ENCODE measurements at regions of chr12 and their contacts with region 1.

Region 1: GRCh38 chr12:15584366-15585041 is 204.7 kb downstream of the EPS8 start:
- DNase-seq: peak in 8 of 14 experiments; percentile 7 to 85 (median 44)
- ATAC-seq: peak; percentile 61
- H3K4me3 ChIP-seq: no peak overlapping the region
- H3K4me3 Mint-ChIP-seq: no peak overlapping the region
- H3K27ac ChIP-seq: no peak overlapping the region
- H3K27ac Mint-ChIP-seq: no peak overlapping the region
- H3K4me1 ChIP-seq: no peaks in the 10 kb centered on the region
- H3K4me1 Mint-ChIP-seq: peaks cover 18% of the 10 kb centered on the region
- H3K27me3 ChIP-seq: no peaks in the 10 kb centered on the region
- H3K27me3 Mint-ChIP-seq: no peaks in the 10 kb centered on the region
- CTCF ChIP-seq: peak; percentile 77

Region 2: GRCh38 chr12:15227004-15227679 is 357.4 kb before region 1 on chr12:
- CTCF ChIA-PET with region 1: no interaction called
- POLR2A ChIA-PET with region 1: no interaction called
- intact Hi-C with region 1: loop called in 1 of 2 experiments (anchors 5 kb)
- DNase-seq: peak in 7 of 14 experiments; percentile 2 to 43 (median 20)
- ATAC-seq: no peak
- H3K4me3 ChIP-seq: no peak overlapping the region
- H3K4me3 Mint-ChIP-seq: no peak overlapping the region
- H3K27ac ChIP-seq: no peak overlapping the region
- H3K27ac Mint-ChIP-seq: no peak overlapping the region
- H3K4me1 ChIP-seq: no peaks in the 10 kb centered on the region
- H3K4me1 Mint-ChIP-seq: peaks cover 4% of the 10 kb centered on the region
- H3K27me3 ChIP-seq: peaks cover 3 to 38% of the 10 kb centered on the region in 2 experiments
- H3K27me3 Mint-ChIP-seq: peaks cover 66% of the 10 kb centered on the region
- CTCF ChIP-seq: peak; percentile 41

Region 3: GRCh38 chr12:15276088-15276698 is 308.3 kb before region 1 on chr12:
- CTCF ChIA-PET with region 1: interaction called, 5 read pairs
- POLR2A ChIA-PET with region 1: interaction called, 4 read pairs
- intact Hi-C with region 1: loop called (anchors 1 to 2 kb)
- DNase-seq: peak in 3 of 14 experiments; percentile 11 to 36 (median 32)
- ATAC-seq: no peak
- H3K4me3 ChIP-seq: no peak overlapping the region
- H3K4me3 Mint-ChIP-seq: no peak overlapping the region
- H3K27ac ChIP-seq: no peak overlapping the region
- H3K27ac Mint-ChIP-seq: no peak overlapping the region
- H3K4me1 ChIP-seq: peaks cover 12% of the 10 kb centered on the region
- H3K4me1 Mint-ChIP-seq: peaks cover 10% of the 10 kb centered on the region
- H3K27me3 ChIP-seq: peaks cover 0 to 12% of the 10 kb centered on the region in 2 experiments
- H3K27me3 Mint-ChIP-seq: peaks cover under 1% of the 10 kb centered on the region
- CTCF ChIP-seq: peak; percentile 75

Region 4: GRCh38 chr12:15546102-15546701 is 38.3 kb before region 1 on chr12:
- CTCF ChIA-PET with region 1: interaction called, 9 read pairs
- POLR2A ChIA-PET with region 1: interaction called, 24 read pairs
- intact Hi-C with region 1: no loop called
- DNase-seq: peak in 10 of 14 experiments; percentile 21 to 81 (median 45)
- ATAC-seq: peak; percentile 93
- H3K4me3 ChIP-seq: peak overlapping the region; percentile 19
- H3K4me3 Mint-ChIP-seq: peak overlapping the region; percentile 83
- H3K27ac ChIP-seq: peak overlapping the region; percentile 59 to 67
- H3K27ac Mint-ChIP-seq: peak overlapping the region; percentile 100
- H3K4me1 ChIP-seq: peaks cover 22% of the 10 kb centered on the region
- H3K4me1 Mint-ChIP-seq: peaks cover 85% of the 10 kb centered on the region
- H3K27me3 ChIP-seq: no peaks in the 10 kb centered on the region
- H3K27me3 Mint-ChIP-seq: no peaks in the 10 kb centered on the region
- CTCF ChIP-seq: no peak

Region 5: DNA sequence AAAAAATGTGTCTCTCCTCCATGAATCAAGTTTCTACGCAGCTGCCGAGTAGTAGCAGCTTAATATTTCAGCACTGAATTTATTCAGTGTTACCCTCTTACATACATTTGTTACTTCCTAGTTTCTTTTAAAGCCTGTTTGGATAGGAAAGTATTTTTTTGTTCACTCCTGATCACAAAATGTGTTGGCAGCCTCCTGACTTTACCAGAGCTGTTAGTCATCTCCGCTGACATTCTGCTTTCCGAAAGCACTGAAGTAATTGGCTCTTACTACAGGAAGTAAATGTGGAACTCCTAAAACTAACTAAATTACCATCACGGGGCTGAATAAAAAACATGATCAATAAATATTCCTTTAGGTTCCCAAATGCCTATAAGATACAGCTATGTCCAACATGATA is 20.8 kb before region 1 on chr12:
- CTCF ChIA-PET with region 1: interaction called, 16 read pairs
- POLR2A ChIA-PET with region 1: interaction called, 5 read pairs
- intact Hi-C with region 1: no loop called
- DNase-seq: peak in 4 of 14 experiments; percentile 57 to 72 (median 66)
- ATAC-seq: peak; percentile 85
- H3K4me3 ChIP-seq: peak overlapping the region; percentile 24
- H3K4me3 Mint-ChIP-seq: peak overlapping the region; percentile 56
- H3K27ac ChIP-seq: peak overlapping the region; percentile 64 to 76
- H3K27ac Mint-ChIP-seq: peak overlapping the region; percentile 85
- H3K4me1 ChIP-seq: peaks cover 10% of the 10 kb centered on the region
- H3K4me1 Mint-ChIP-seq: peaks cover 52% of the 10 kb centered on the region
- H3K27me3 ChIP-seq: no peaks in the 10 kb centered on the region
- H3K27me3 Mint-ChIP-seq: no peaks in the 10 kb centered on the region
- CTCF ChIP-seq: no peak

Measured in CD4-positive, alpha-beta T cell (primary cell).